Lower leg skin (tissue), 4 donors: ENCODE measurements at regions of chr18 and their contacts with region 1.

Region 1: GRCh38 chr18:35580701-35581539 is 620 bp upstream of the GALNT1 start:
- DNase-seq: peak; percentile 50 to 91
- H3K4me3 ChIP-seq: peak overlapping the region; percentile 69
- CTCF ChIP-seq: no peak
- POLR2A ChIP-seq: no peak

Region 2: DNA sequence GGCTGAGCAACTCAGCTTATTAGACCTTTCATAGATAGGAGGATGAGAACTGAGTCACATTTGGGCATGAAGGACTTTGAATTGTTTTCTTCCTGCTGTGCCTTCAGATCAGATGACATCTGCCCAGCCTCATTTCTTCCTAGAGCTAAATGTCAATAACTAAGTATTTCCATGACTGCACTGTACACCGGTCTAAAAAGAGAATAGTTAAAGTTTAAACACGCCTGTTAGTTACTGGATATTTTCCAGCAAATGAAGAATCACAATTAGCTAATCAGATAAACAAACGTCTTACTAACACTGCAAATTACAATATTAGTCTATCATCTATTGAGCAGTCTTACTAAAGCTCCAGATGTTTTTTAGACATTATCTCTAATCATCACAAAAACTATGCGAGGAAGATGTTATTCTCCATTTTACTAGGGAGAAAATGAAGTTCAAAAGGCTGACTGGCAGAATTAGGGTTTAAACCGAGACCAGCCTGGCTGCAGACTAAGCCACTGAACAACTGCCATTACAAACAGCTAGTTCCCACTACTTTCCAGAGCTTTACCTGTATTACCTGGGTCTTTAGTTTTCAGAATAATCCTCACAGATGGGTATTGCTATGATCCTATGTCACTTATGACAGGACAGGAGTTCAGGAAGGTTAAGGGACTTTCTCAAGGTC is 409.5 kb before region 1 on chr18:
- intact Hi-C with region 1: no loop called
- DNase-seq: peak in 1 of 2 donors; percentile 27
- H3K4me3 ChIP-seq: no peak overlapping the region
- CTCF ChIP-seq: no peak
- POLR2A ChIP-seq: no peak

Region 3: GRCh38 chr18:35345460-35345921 is 235.4 kb before region 1 on chr18:
- intact Hi-C with region 1: no loop called
- DNase-seq: no peak
- H3K4me3 ChIP-seq: no peak overlapping the region
- CTCF ChIP-seq: no peak
- POLR2A ChIP-seq: no peak

Region 4: GRCh38 chr18:35410561-35410960 is 170.4 kb before region 1 on chr18:
- intact Hi-C with region 1: loop called (anchors 5 kb)
- DNase-seq: no peak
- H3K4me3 ChIP-seq: no peak overlapping the region
- CTCF ChIP-seq: no peak
- POLR2A ChIP-seq: no peak